ENCODE measurements at regions of chr6 and their contacts with region 1.

Region 1: DNA sequence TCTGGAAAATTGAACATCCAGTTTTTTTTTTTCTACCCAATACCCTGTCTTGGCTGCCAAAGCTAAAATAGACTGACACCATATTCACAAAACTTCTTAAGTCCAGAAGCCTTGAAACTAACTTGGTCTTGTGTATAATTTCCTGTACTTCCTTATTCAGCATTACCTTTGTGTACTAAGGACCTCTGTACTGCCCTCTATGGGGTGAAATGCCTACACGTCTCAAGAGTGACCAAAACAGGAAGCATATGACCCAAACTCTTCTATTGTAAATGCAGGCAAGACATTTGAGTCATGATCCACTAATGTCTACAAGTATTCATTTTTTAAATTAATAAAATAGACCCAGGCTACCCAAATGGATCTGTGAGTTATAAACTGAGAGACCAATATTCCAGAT is 50.4 kb downstream of the HMGCLL1 start:
- DNase-seq: peak; percentile 44
- H3K4me3 ChIP-seq: no peak overlapping the region
- H3K27ac ChIP-seq: no peak overlapping the region
- H3K4me1 ChIP-seq: no peaks in the 10 kb centered on the region
- H3K27me3 ChIP-seq: no peaks in the 10 kb centered on the region
- CTCF ChIP-seq: peak; percentile 56 to 67

Region 2: DNA sequence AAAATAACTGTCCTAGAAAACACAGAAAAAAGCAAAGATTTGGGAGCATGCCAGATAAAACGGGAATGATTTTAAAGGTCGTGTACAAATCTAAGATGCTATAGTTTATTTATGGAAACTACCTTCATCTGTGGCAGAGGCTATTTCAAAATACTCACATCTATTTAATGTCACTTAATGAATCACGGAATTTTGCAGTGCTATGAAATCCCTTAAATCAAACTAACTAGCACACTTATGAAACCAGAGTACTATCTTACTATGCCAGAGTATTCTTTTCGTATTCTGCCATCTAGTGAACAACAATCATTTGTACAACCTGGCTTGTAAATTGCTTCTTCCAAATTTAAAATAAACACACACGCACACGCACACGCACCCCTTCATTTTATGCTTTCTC is 424.7 kb after region 1 on chr6:
- CTCF ChIA-PET with region 1: no interaction called
- dilution Hi-C with region 1: no loop called
- in situ Hi-C with region 1: no loop called
- intact Hi-C with region 1: loop called (anchors 5 kb)
- DNase-seq: peak; percentile 36
- H3K4me3 ChIP-seq: peak overlapping the region in 2 of 3 experiments; percentile 1 to 2
- H3K27ac ChIP-seq: no peak overlapping the region
- H3K4me1 ChIP-seq: no peaks in the 10 kb centered on the region
- H3K27me3 ChIP-seq: no peaks in the 10 kb centered on the region
- CTCF ChIP-seq: peak; percentile 43 to 56